Psoas muscle (tissue), 8 donors: ENCODE measurements at regions of chr22 and their contacts with region 1.

Region 1: GRCh38 chr22:38114484-38115398 is 4.3 kb upstream of the BAIAP2L2 start:
- DNase-seq: peak; percentile 86 to 94
- ATAC-seq: peak; percentile 89 to 95 (median 90)
- H3K4me3 ChIP-seq: no peak overlapping the region
- H3K27ac ChIP-seq: no peak overlapping the region
- H3K4me1 ChIP-seq: no peaks in the 10 kb centered on the region
- H3K27me3 ChIP-seq: no peaks in the 10 kb centered on the region
- CTCF ChIP-seq: peak; percentile 88

Region 2: DNA sequence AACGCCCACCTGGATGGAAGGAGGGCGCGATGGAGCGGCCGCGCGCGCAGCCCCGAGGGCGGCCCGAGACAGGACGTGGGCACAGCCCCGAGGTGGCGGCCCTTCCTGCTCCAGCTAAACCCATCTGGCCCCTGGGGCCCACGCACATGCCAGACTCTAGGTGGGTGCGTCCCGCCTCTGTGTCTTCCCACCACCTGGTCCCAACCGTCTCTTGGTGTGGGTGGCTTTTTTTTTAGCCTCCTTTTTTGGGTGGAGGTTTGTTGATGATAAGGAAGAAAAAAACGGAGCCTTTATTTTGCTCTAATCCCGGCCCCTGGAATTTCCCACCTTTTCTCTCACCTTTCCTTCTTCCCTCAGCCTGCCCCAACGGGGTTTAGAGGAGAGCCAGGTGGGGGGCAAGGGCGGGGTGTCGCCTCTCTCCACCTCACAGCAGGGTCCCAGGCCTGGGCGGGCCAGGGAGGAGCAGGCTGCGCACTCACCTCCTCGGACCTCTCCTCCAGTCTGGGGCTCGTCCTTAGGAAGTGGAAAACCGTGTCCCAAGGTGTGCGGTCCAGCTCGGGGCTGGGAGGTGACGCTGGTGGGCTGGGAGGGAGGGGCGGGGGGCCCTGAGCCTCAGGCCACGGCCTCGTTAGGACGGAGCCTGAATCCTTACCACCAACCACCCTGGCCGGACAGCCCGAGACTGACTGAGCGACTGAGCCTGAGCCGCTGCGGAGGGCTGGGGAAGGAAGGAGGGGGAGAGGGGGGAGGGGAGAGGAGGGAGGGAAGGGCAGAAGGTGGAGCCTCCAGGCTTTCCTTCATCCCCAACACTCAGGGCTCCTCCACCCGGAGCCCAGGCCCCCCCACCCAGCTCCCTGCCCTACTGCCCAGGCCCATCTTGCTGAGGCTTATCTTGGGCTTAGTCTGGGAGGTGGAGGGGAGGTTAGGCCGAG is 130.6 kb before region 1 on chr22 and contains the start of gene SOX10:
- intact Hi-C with region 1: no loop called
- DNase-seq: no peak
- ATAC-seq: no peak
- H3K4me3 ChIP-seq: no peak within 1 kb of the TSS
- H3K27ac ChIP-seq: no peak within 1 kb of the TSS
- H3K4me1 ChIP-seq: no peaks in the 10 kb centered on the region
- H3K27me3 ChIP-seq: no peaks in the 10 kb centered on the region
- CTCF ChIP-seq: no peak
- total RNA-seq, gene SOX10: 0.25 to 0.36 TPM in 2 of 4 donors, not detected in the others

Region 3: GRCh38 chr22:38167988-38168431 is 53.3 kb after region 1 on chr22:
- intact Hi-C with region 1: loop called in 1 of 2 experiments (anchors 5 kb)
- DNase-seq: peak; percentile 55 to 84
- ATAC-seq: peak; percentile 54 to 75 (median 70)
- H3K4me3 ChIP-seq: no peak overlapping the region
- H3K27ac ChIP-seq: peak overlapping the region; percentile 68
- H3K4me1 ChIP-seq: peaks cover 33% of the 10 kb centered on the region
- H3K27me3 ChIP-seq: no peaks in the 10 kb centered on the region
- CTCF ChIP-seq: no peak